CD8-positive, alpha-beta T cell (primary cell): ENCODE measurements at regions of chr12 and their contacts with region 1.

Region 1: DNA sequence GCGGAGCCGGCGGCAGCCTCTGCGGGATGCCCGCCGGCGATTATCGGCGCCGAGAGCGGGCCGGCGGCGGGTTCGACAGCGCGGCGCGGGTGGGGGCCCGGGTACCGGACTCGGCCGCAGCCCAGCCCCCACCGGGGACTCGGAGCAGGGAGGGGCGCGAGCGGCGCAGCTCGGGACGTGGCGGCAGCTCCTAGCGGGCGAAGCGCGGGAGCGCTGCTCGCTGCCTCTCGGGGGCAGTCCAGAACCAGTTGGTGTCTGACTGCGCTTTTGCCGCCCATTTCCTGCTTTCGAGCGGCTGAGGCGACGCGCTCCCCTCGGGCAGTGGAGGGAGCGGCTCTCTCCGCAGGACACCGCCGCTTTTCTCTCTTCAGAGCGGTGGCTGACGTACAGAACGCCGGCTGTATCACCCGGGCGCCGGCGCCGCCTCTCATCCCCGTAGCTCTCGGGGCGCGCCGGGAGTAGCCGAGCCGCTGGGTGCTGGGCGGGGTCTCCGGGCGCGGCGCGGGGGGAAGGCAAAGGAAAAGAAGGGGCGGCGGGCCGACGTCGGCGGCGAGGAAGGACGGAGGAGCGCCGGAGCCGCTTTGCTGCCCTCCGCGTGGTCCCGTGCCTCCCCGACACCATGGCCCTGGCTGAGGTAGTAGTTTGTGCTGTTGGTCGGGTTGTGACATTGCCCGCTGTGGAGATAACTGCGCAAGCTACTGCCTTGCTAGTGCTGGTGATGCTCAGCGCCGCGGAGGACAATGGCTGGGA is 136.6 kb downstream of the MON2 start:
- DNase-seq: peak; percentile 61 to 92 (median 79)
- ATAC-seq: peak; percentile 64
- H3K4me3 ChIP-seq: peak overlapping the region; percentile 87 to 94
- H3K4me3 Mint-ChIP-seq: peak overlapping the region; percentile 94
- H3K27ac ChIP-seq: peak overlapping the region; percentile 96 to 99
- H3K27ac Mint-ChIP-seq: peak overlapping the region; percentile 99
- H3K4me1 ChIP-seq: peaks cover 19% of the 10 kb centered on the region
- H3K4me1 Mint-ChIP-seq: peaks cover 31% of the 10 kb centered on the region
- H3K27me3 ChIP-seq: no peaks in the 10 kb centered on the region
- H3K27me3 Mint-ChIP-seq: no peaks in the 10 kb centered on the region
- CTCF ChIP-seq: peak; percentile 44

Region 2: DNA sequence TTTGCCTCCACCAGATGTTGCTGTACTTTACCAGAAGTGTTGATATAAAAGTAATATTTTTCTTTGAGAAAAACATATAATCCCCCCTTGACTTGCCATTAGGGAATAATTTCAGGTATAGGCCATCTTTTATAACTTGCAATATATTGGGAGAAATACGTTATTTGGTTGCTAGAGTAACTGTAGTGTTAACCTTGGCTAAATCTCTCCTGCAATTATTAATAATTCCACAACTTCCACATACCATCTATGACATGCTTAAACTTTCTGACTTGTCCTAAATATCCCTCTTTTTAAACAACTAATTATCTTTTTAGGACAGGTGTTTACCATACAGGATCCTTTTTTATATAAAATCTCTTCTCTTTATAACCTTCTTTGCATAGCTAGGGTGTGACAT is 1959.2 kb before region 1 on chr12:
- CTCF ChIA-PET with region 1: no interaction called
- POLR2A ChIA-PET with region 1: no interaction called
- intact Hi-C with region 1: no loop called
- DNase-seq: no peak
- ATAC-seq: no peak
- H3K4me3 ChIP-seq: no peak overlapping the region
- H3K4me3 Mint-ChIP-seq: no peak overlapping the region
- H3K27ac ChIP-seq: no peak overlapping the region
- H3K27ac Mint-ChIP-seq: no peak overlapping the region
- H3K4me1 ChIP-seq: no peaks in the 10 kb centered on the region
- H3K4me1 Mint-ChIP-seq: no peaks in the 10 kb centered on the region
- H3K27me3 ChIP-seq: no peaks in the 10 kb centered on the region
- H3K27me3 Mint-ChIP-seq: no peaks in the 10 kb centered on the region
- CTCF ChIP-seq: no peak

Region 3: DNA sequence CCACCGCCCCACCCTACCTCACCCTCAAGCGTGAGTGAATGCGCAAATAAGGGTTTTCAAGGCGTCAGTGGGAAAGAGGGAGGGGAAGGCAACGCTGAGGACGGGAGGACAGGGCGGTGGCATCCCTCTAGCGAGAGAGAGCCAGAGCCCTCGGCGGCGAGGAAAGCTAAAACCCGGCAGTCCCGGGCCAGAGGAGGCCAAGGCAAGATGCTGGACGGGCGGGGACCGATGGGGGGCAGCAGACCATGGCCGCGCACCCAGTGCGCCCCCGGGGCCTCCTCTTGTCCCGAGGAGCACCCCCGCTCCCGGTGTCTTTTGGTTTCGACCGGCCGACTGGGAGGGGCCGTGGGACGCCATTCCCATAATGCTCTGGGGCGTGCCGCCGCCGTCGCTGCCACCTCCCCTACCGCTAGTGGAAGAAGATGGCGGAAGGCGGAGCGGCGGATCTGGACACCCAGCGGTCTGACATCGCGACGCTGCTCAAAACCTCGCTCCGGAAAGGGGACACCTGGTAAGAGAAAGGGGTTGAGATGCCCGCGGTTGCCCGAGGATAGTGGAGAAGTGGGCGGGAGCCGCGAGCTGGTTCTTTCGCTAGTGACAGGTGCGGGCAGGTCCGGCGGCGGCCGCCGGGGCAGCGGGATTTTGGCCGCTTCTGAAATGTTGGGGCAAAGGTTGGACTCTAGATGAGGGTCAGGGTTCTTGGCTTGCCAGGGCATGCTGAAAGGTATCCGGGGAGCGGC is 343.1 kb before region 1 on chr12 and contains the start of gene USP15:
- CTCF ChIA-PET with region 1: no interaction called
- POLR2A ChIA-PET with region 1: interaction called, 10 read pairs
- intact Hi-C with region 1: loop called (anchors 1 to 2 kb)
- DNase-seq: peak; percentile 93 to 98 (median 96)
- ATAC-seq: peak; percentile 76
- H3K4me3 ChIP-seq: peak within 1 kb of the TSS; percentile 78 to 92
- H3K4me3 Mint-ChIP-seq: peak within 1 kb of the TSS; percentile 95
- H3K27ac ChIP-seq: peak within 1 kb of the TSS; percentile 92 to 97
- H3K27ac Mint-ChIP-seq: peak within 1 kb of the TSS; percentile 99
- H3K4me1 ChIP-seq: peaks cover 58% of the 10 kb centered on the region
- H3K4me1 Mint-ChIP-seq: peaks cover 64% of the 10 kb centered on the region
- H3K27me3 ChIP-seq: no peaks in the 10 kb centered on the region
- H3K27me3 Mint-ChIP-seq: no peaks in the 10 kb centered on the region
- CTCF ChIP-seq: peak; percentile 16
- total RNA-seq, gene USP15: 213 to 224 TPM

Region 4: DNA sequence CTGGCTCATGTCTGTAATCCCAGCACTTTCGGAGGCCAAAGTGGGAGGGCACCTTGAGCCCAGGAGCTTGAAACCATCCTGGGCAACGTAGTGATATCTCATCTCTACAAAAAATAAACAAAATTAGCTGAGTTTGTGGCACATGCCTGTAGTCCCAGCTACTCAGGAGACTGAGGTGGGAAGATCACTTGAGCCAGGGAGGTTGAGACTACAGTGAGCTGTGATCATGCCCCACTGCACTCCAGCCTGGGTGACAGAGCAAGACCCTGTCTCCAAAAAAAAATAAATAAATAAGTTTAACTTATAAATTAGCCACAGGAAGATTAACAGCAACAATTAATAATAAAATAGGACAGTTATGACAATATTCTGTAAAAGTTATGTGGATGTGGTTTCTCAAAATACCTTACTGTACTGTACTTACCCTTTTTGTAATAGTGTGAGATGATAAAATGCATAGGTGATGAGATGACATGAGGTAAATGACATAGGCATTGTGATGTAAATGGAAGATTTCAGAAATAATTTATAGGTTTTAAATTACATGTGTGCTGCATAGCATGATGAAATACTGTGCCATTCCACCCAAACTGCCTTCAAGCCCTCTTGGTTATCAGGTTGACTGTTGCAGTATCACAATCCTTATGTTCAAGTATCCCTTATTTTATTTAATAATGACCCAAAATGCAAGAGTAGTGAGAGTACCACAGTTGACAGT is 321.0 kb before region 1 on chr12:
- CTCF ChIA-PET with region 1: no interaction called
- POLR2A ChIA-PET with region 1: no interaction called
- intact Hi-C with region 1: no loop called
- DNase-seq: no peak
- ATAC-seq: no peak
- H3K4me3 ChIP-seq: no peak overlapping the region
- H3K4me3 Mint-ChIP-seq: no peak overlapping the region
- H3K27ac ChIP-seq: no peak overlapping the region
- H3K27ac Mint-ChIP-seq: no peak overlapping the region
- H3K4me1 ChIP-seq: peaks cover 30% of the 10 kb centered on the region
- H3K4me1 Mint-ChIP-seq: peaks cover 81% of the 10 kb centered on the region
- H3K27me3 ChIP-seq: no peaks in the 10 kb centered on the region
- H3K27me3 Mint-ChIP-seq: no peaks in the 10 kb centered on the region
- CTCF ChIP-seq: no peak

Region 5: GRCh38 chr12:62581288-62582064 is 21.8 kb before region 1 on chr12:
- CTCF ChIA-PET with region 1: interaction called, 7 read pairs
- POLR2A ChIA-PET with region 1: no interaction called
- intact Hi-C with region 1: loop called in 1 of 2 experiments (anchors 2 kb)
- DNase-seq: peak in 2 of 9 experiments; percentile 53 to 67
- ATAC-seq: peak; percentile 59
- H3K4me3 ChIP-seq: no peak overlapping the region
- H3K4me3 Mint-ChIP-seq: no peak overlapping the region
- H3K27ac ChIP-seq: no peak overlapping the region
- H3K27ac Mint-ChIP-seq: no peak overlapping the region
- H3K4me1 ChIP-seq: no peaks in the 10 kb centered on the region
- H3K4me1 Mint-ChIP-seq: no peaks in the 10 kb centered on the region
- H3K27me3 ChIP-seq: no peaks in the 10 kb centered on the region
- H3K27me3 Mint-ChIP-seq: no peaks in the 10 kb centered on the region
- CTCF ChIP-seq: peak; percentile 66

Region 6: DNA sequence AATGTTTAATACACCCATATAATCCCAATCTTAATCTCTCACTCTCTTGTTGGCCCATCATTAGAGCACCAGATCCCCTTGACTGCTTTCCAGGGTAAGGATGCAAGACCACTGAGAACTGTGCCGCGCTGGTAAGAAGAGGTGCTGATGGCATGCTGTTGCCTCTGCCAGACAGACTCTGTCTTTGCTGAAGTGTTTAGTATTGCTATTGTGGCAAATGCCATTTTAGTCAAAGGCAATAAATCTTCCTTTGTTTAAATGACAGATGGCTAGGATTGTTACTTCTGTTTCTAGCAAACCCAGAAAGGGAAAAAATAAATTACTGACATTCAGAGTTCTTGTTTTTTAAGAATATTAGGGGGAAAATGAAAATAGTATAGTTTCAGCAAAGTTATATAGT is 15.7 kb after region 1 on chr12:
- CTCF ChIA-PET with region 1: interaction called, 6 read pairs
- POLR2A ChIA-PET with region 1: interaction called, 8 read pairs
- intact Hi-C with region 1: loop called in 1 of 2 experiments (anchors 1 kb)
- DNase-seq: no peak
- ATAC-seq: no peak
- H3K4me3 ChIP-seq: no peak overlapping the region
- H3K4me3 Mint-ChIP-seq: no peak overlapping the region
- H3K27ac ChIP-seq: no peak overlapping the region
- H3K27ac Mint-ChIP-seq: no peak overlapping the region
- H3K4me1 ChIP-seq: no peaks in the 10 kb centered on the region
- H3K4me1 Mint-ChIP-seq: no peaks in the 10 kb centered on the region
- H3K27me3 ChIP-seq: no peaks in the 10 kb centered on the region
- H3K27me3 Mint-ChIP-seq: no peaks in the 10 kb centered on the region
- CTCF ChIP-seq: no peak

Region 7: GRCh38 chr12:62659453-62660295 is 56.4 kb after region 1 on chr12:
- CTCF ChIA-PET with region 1: no interaction called
- POLR2A ChIA-PET with region 1: no interaction called
- intact Hi-C with region 1: no loop called
- DNase-seq: no peak
- ATAC-seq: no peak
- H3K4me3 ChIP-seq: no peak overlapping the region
- H3K4me3 Mint-ChIP-seq: no peak overlapping the region
- H3K27ac ChIP-seq: no peak overlapping the region
- H3K27ac Mint-ChIP-seq: no peak overlapping the region
- H3K4me1 ChIP-seq: no peaks in the 10 kb centered on the region
- H3K4me1 Mint-ChIP-seq: peaks cover 2% of the 10 kb centered on the region
- H3K27me3 ChIP-seq: no peaks in the 10 kb centered on the region
- H3K27me3 Mint-ChIP-seq: peaks cover 4% of the 10 kb centered on the region
- CTCF ChIP-seq: no peak

Region 8: GRCh38 chr12:62793256-62794217 is 190.3 kb after region 1 on chr12:
- CTCF ChIA-PET with region 1: interaction called, 11 read pairs
- POLR2A ChIA-PET with region 1: interaction called, 6 read pairs
- intact Hi-C with region 1: loop called in 1 of 2 experiments (anchors 1 kb)
- DNase-seq: peak; percentile 47 to 85 (median 71)
- ATAC-seq: peak; percentile 83
- H3K4me3 ChIP-seq: no peak overlapping the region
- H3K4me3 Mint-ChIP-seq: no peak overlapping the region
- H3K27ac ChIP-seq: no peak overlapping the region
- H3K27ac Mint-ChIP-seq: no peak overlapping the region
- H3K4me1 ChIP-seq: no peaks in the 10 kb centered on the region
- H3K4me1 Mint-ChIP-seq: no peaks in the 10 kb centered on the region
- H3K27me3 ChIP-seq: no peaks in the 10 kb centered on the region
- H3K27me3 Mint-ChIP-seq: peaks cover 3% of the 10 kb centered on the region
- CTCF ChIP-seq: peak; percentile 93

Region 9: GRCh38 chr12:64222009-64222765 is 1619.0 kb after region 1 on chr12 and contains the start of gene KICS2:
- CTCF ChIA-PET with region 1: no interaction called
- POLR2A ChIA-PET with region 1: no interaction called
- intact Hi-C with region 1: loop called in 1 of 2 experiments (anchors 5 kb)
- DNase-seq: peak; percentile 82 to 97 (median 90)
- ATAC-seq: peak; percentile 82
- H3K4me3 ChIP-seq: peak within 1 kb of the TSS; percentile 67 to 94
- H3K4me3 Mint-ChIP-seq: peak within 1 kb of the TSS; percentile 93
- H3K27ac ChIP-seq: peak within 1 kb of the TSS; percentile 95 to 97
- H3K27ac Mint-ChIP-seq: peak within 1 kb of the TSS; percentile 98
- H3K4me1 ChIP-seq: peaks cover 12% of the 10 kb centered on the region
- H3K4me1 Mint-ChIP-seq: peaks cover 39% of the 10 kb centered on the region
- H3K27me3 ChIP-seq: no peaks in the 10 kb centered on the region
- H3K27me3 Mint-ChIP-seq: peaks cover 8% of the 10 kb centered on the region
- CTCF ChIP-seq: no peak
- total RNA-seq, gene KICS2: 13.9 to 15.5 TPM